ENCODE measurements at regions of chr9 and their contacts with region 1.

Region 1: GRCh38 chr9:129036241-129036922 is at the start of gene MIGA2:
- DNase-seq: peak; percentile 94 to 99 (median 99)
- H3K4me3 ChIP-seq: peak within 1 kb of the TSS; percentile 64 to 100 (median 97)
- H3K27ac ChIP-seq: peak within 1 kb of the TSS; percentile 39 to 93 (median 85)
- H3K27me3 ChIP-seq: no peaks in the 10 kb centered on the region
- CTCF ChIP-seq: peak in 40 of 56 donors; percentile 9 to 60 (median 34)
- total RNA-seq, gene MIGA2: 33.8 to 76.4 (median 47.9) TPM

Region 2: DNA sequence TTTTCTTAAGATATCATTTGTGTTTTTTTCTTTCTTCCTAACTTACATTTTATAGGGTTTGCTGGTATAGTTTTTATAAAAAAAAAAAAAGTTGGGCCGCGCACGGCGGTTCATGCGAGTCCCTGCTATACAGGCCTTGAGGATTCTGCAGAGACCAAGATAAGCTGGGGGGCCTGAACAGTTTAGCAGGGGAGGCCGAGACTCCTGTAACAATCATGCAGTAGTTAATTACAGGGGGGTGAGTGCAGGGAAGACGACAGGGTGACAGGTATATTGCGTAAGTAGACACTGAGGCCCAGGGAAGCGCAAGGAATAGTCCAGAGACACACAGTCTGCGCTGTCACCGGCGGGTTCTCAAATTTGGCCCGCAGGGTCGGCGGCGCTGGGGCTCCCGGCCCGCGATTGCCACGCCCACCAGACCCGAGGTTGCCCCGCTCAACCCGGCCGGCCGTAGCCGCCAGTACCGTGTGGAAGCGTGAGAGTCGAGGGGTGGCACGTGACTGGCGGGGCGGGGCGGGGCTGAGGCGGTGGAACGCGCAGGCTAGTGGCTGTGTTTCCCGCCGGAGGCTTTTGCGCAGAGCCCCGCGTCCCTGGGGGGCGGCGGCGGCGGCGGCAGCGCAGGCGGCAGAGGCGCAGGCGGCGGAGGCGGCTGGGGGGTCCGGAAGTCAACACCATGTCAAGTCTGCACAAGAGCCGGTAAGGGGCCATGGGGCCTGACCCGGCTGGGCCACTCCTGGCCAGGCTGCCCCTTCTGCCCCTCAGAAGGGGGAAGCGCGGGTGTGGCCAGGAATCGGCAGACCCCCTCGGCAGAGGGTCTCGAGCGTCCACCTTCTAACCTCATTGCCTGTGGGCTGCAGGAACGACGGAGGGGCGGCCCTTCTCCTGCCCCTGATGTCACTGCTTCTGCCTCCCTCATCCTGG is 249.4 kb before region 1 on chr9 and contains the start of gene TBC1D13:
- intact Hi-C with region 1: loop called in 1 of 2 experiments (anchors 5 kb)
- DNase-seq: peak; percentile 81 to 93 (median 88)
- H3K4me3 ChIP-seq: peak within 1 kb of the TSS; percentile 57 to 100 (median 98)
- H3K27ac ChIP-seq: peak within 1 kb of the TSS; percentile 66 to 97 (median 91)
- H3K27me3 ChIP-seq: no peaks in the 10 kb centered on the region
- CTCF ChIP-seq: peak in 41 of 56 donors; percentile 6 to 62 (median 34)
- total RNA-seq, gene TBC1D13: 32.1 to 59.0 (median 40.5) TPM

Region 3: GRCh38 chr9:128818099-128818838 is 218.1 kb before region 1 on chr9 and contains the start of gene ENDOG:
- intact Hi-C with region 1: no loop called
- DNase-seq: peak; percentile 97 to 99 (median 98)
- H3K4me3 ChIP-seq: peak within 1 kb of the TSS; percentile 48 to 90 (median 74)
- H3K27ac ChIP-seq: peak within 1 kb of the TSS; percentile 36 to 95 (median 89)
- H3K27me3 ChIP-seq: no peaks in the 10 kb centered on the region
- CTCF ChIP-seq: peak; percentile 69 to 98 (median 90)
- total RNA-seq, gene ENDOG: 20.4 to 57.3 (median 35.8) TPM

Region 4: GRCh38 chr9:128947422-128948301 is 88.7 kb before region 1 on chr9 and contains the starts of genes DOLK and NUP188:
- intact Hi-C with region 1: loop called in 1 of 2 experiments (anchors 5 kb)
- DNase-seq: peak; percentile 91 to 99 (median 96)
- H3K4me3 ChIP-seq: peak within 1 kb of the TSS; percentile 63 to 100 (median 92)
- H3K27ac ChIP-seq: peak within 1 kb of the TSS; percentile 52 to 97 (median 92)
- H3K27me3 ChIP-seq: no peaks in the 10 kb centered on the region
- CTCF ChIP-seq: peak in 14 of 56 donors; percentile 11 to 54 (median 25)
- total RNA-seq, gene DOLK: 3.6 to 13.2 (median 8.4) TPM
- total RNA-seq, gene NUP188: 23.7 to 70.4 (median 41.1) TPM

Region 5: DNA sequence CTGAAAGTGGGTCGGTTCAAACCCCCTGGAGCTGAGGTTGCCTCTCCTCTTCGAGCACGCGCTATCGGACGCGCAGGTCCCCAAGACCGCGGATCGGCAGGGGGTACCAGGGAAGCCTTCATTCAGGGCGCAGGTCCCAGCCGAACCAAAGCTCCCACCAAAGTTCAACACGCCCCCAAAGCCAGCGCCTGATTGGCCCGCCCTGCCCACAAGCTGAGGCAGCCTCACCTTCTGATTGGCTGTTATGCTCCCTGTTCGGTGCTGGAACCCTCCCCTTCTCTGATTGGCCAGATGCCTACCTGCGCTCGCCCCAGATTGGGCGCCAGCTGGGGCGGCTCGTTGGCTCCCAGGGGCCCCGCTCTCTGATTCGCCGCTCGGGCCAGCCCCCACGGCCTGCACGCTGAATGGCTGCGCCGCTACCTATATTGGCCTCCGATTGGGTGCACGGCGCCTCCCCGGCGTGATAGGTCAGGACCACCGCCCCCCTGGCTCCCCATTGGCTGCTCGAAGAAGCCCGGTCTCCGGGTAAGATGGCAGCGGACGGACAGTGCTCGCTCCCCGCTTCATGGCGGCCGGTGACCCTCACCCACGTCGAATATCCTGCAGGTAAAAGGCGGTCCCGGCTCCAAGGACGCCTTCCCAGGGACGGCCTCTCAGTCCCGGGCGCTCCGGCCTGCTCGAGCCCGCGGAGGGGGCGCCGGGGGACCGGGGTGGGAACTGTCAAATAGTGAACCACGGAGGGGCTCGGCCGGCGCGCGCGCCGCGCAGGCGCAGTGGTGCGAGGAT is 44.4 kb after region 1 on chr9 and contains the start of gene DOLPP1:
- intact Hi-C with region 1: loop called in 1 of 2 experiments (anchors 5 kb)
- DNase-seq: peak; percentile 96 to 99 (median 98)
- H3K4me3 ChIP-seq: peak within 1 kb of the TSS; percentile 63 to 100 (median 86)
- H3K27ac ChIP-seq: peak within 1 kb of the TSS; percentile 17 to 97 (median 87)
- H3K27me3 ChIP-seq: no peaks in the 10 kb centered on the region
- CTCF ChIP-seq: peak in 21 of 56 donors; percentile 5 to 50 (median 21)
- total RNA-seq, gene DOLPP1: 9.9 to 26.6 (median 16.5) TPM

Region 6: GRCh38 chr9:129109950-129110739 is 73.8 kb after region 1 on chr9:
- intact Hi-C with region 1: loop called in 1 of 2 experiments (anchors 5 kb)
- DNase-seq: peak in 1 of 10 donors; percentile 13
- H3K4me3 ChIP-seq: peak overlapping the region; percentile 70 to 100 (median 90)
- H3K27ac ChIP-seq: peak overlapping the region in 58 of 59 donors; percentile 15 to 99 (median 94)
- H3K27me3 ChIP-seq: no peaks in the 10 kb centered on the region
- CTCF ChIP-seq: peak in 2 of 56 donors; percentile 6 to 9

Measured in dorsolateral prefrontal cortex (tissue), 120 donors.